AG04450 (cell line): ENCODE measurements at regions of chr12 and their contacts with region 1.

Region 1: DNA sequence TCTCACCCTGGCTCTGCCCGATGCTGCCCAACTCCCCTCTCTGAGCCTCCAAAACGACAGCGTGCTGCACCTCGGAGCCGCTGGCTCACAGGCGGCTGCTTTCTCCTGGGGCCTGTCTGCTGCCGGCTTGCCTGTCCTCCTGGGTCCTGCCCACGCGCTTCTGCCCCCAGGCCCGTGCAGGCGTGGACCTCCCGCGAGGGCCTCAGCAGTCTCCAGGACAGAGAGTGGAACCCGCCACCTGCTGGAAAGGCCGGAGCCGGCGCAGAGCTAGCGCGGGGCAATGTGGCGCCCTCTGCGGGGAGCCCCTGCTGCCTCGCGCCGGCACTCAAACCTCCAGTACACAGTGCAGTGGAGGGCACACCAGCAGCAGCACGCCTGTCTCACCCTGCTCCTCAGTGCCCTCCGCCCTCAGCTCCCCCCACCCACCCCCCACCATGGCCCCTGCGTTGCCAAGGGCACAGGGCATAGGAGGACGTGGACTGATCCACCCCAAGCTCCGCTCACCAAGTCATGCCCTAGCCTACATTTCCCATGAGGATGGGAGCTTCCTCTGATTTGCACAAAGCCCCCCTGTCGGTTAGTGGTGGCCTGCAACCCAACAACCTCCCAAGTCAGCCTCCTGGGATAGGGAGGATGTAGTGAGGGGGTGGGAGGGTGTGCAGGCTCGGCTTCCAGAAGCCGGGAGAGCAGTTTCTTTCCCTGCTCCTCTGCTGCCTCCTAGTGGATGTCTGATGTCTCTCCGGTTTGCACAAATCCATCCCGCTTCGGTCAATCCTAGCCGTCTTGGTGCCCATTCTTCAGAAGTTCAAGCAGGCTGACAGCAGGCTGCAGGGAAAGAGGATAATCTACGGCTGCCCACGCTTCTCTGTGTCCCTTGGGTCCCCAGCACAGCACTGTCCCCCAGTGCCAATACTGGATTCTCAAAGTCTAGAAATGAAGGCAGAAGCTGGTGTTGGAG is 25.2 kb downstream of the KRT8 start:
- DNase-seq: no peak
- H3K4me3 ChIP-seq: peak overlapping the region; percentile 35
- H3K27ac ChIP-seq: no peak overlapping the region
- H3K27me3 ChIP-seq: no peaks in the 10 kb centered on the region
- CTCF ChIP-seq: peak; percentile 87

Region 2: DNA sequence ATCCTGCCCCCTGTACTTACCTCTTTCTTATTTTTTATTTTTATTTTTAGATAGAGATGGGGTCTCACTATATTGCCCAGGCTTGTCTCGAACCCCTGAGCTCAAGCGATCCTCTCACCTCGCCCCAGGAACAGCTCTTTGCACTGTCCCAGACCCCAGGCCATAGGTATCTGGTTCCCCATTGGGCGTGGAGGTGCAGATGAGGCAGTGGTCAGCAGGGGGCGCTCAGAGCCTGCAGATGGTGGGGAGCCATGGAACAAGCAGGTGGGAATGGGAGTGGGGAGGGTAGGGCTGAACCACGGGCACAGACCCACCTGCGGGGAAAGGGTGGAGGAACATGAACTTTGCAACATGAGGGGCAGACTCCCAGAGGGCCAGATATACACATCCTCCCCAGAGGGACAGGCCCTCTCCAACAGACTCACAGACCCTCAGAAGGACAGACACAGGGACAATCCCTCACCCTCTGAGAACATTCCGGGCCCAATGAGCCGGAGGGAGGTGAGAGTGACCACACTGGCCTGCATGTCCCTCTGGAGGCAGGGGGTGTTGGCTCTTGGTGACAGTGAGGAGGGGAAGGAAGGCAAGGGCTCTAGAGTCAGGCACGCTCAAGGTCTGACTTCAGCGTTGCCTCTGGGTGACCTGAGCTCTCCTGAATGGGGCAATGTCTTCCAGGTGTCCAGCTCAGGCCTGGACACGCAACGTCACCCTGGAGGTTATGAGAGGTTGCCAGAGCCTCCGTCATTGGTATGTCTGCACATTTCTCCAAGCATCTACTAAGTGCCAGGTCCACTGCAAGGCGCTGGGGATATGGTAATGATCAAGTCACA is 722.7 kb before region 1 on chr12:
- CTCF ChIA-PET with region 1: interaction called, 29 read pairs
- POLR2A ChIA-PET with region 1: no interaction called
- DNase-seq: no peak
- H3K4me3 ChIP-seq: no peak overlapping the region
- H3K27ac ChIP-seq: no peak overlapping the region
- H3K27me3 ChIP-seq: no peaks in the 10 kb centered on the region
- CTCF ChIP-seq: peak; percentile 96

Region 3: DNA sequence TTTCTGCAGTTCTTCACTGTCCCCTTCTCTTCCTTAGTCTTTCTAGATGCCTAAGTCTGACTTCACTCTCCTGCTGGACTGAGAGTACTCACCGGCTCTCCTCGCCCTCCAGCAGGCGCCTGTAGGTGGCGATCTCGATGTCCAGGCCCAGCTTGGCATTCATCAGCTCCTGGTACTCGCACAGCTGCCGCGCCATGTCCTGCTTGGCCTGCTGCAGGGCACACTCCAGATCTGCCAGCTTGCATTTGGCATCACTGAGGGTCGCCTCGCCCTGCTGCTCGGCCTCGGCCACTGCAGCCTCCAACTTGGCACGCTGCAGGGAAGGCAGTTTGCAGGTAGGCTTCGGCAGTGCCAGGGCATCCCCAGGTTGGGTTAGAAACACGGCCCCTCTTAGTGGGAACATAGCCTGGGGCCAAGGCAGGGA is 499.4 kb before region 1 on chr12:
- CTCF ChIA-PET with region 1: interaction called, 15 read pairs
- POLR2A ChIA-PET with region 1: no interaction called
- DNase-seq: no peak
- H3K4me3 ChIP-seq: no peak overlapping the region
- H3K27ac ChIP-seq: no peak overlapping the region
- H3K27me3 ChIP-seq: peaks cover 39% of the 10 kb centered on the region
- CTCF ChIP-seq: peak; percentile 55

Region 4: GRCh38 chr12:52582971-52583456 is 296.7 kb before region 1 on chr12:
- CTCF ChIA-PET with region 1: interaction called, 203 read pairs
- POLR2A ChIA-PET with region 1: no interaction called
- DNase-seq: peak; percentile 3
- H3K4me3 ChIP-seq: no peak overlapping the region
- H3K27ac ChIP-seq: no peak overlapping the region
- H3K27me3 ChIP-seq: peaks cover 37% of the 10 kb centered on the region
- CTCF ChIP-seq: peak; percentile 85

Region 5: DNA sequence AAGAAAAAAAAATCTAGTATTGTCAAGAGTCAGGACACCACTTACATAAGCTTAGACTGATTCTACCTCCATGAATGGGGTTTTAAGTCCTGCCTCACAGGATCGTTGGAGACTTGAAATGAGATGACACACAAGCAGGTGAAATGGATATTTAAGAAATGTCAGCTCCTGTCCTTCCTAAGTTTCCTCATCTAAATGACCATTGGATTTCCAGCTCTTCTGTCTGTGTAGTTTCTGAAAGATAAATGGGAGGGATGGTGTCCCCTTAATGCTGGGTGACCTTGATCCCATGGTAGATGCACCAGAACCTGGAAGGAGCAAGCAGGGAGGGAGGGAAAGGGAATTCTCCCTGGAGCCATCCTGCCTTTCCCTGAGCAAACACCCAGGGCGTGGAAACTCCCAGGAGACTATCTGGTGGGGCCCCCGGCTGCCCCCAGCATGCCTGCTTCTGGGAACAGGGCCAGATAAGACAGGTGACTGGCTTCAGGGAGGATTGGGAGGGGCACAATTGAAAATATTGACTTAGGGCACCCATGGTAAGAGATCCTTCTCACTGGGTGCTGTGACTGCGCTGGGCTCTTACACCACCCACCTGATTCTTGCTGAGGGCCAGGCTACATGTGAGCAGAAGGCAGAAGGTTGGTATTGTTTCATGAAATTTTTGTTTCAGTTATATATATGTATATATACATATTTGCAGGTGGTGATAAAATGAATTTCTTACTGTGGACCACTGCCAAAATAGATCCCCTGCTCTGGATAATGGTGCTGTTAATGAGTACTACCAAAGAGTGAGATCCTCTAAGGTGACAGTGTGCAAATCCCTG is 15.6 kb after region 1 on chr12:
- CTCF ChIA-PET with region 1: interaction called, 74 read pairs
- POLR2A ChIA-PET with region 1: no interaction called
- DNase-seq: no peak
- H3K4me3 ChIP-seq: no peak overlapping the region
- H3K27ac ChIP-seq: no peak overlapping the region
- H3K27me3 ChIP-seq: peaks cover 5% of the 10 kb centered on the region
- CTCF ChIP-seq: no peak

Region 6: DNA sequence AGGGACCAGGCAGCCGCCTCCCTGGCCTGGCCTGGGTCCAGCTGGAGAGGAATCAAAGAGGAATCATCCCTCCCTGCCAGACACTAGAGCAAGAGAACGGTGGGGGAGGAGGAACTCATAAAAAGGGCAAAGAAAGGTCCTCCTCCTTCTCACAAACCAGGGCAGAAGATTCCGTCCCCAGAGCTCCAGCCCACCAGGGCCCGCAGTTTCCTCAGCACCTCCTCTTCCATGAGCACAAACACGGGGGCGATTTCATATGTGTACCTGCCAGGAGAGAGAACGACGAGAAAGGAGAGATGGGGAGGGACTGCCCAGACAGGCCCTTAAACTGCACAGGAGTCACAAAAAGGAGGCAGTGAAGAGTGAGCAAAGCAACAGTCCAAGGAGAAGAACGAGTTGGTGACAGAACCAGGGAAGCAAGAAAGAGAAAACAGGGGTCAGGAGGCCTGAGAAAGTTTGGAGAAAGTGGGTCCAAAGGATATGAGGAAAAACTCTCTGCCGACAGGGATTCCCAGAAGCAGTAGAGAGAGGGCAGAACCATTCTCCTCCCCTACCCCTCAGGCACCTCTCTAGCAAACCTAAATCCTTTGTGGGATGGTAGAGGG is 292.2 kb after region 1 on chr12:
- CTCF ChIA-PET with region 1: no interaction called
- POLR2A ChIA-PET with region 1: no interaction called
- DNase-seq: no peak
- H3K4me3 ChIP-seq: no peak overlapping the region
- H3K27ac ChIP-seq: no peak overlapping the region
- H3K27me3 ChIP-seq: no peaks in the 10 kb centered on the region
- CTCF ChIP-seq: no peak